Esophagus muscularis mucosa (tissue), 4 donors: ENCODE measurements at regions of chr3 and their contacts with region 1.

Region 1: GRCh38 chr3:12556671-12557472 is at the start of gene MKRN2:
- DNase-seq: peak; percentile 95
- H3K4me3 ChIP-seq: peak within 1 kb of the TSS; percentile 76 to 92 (median 89)
- H3K27ac ChIP-seq: peak within 1 kb of the TSS; percentile 93 to 98 (median 96)
- H3K4me1 ChIP-seq: peaks cover 47 to 60% (median 57%) of the 10 kb centered on the region in 4 donors
- H3K27me3 ChIP-seq: peaks cover 0 to 30% (median 8%) of the 10 kb centered on the region in 4 donors
- CTCF ChIP-seq: peak in 1 of 3 experiments; percentile 23
- EP300 ChIP-seq: no peak
- POLR2A ChIP-seq: peak; percentile 95
- total RNA-seq, gene MKRN2: 29.5 to 55.1 (median 38.0) TPM

Region 2: DNA sequence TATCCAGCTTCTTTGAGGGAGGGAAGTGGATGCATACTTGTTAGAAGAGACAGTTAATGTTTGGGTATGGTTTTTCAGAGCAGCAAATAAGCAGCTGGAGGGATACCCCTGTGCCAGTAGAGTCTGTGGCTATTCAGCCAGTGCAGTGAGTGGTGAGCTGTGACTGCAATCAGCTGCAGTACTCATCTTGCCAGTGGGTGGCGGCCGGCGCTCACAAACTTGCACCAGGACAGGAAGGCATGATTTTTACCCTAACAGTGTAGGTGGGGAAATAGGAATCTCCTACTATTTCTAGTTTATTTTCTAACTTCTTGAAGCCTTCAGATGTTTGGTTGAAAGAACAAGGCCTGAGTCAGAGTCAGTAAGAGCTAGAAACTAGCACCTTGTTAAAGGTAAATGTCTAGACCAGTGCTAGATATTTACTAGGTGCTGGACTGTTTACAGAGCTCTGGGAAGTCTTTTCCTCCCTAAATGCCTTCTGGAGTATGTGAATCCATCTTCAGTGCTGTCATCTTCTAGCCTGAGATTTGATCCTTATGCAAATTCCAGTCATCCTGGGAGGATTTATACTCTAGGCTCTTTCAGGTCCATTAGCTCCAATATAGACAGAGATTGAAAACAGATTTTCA is 421.7 kb before region 1 on chr3:
- intact Hi-C with region 1: loop called (anchors 10 kb)
- DNase-seq: no peak
- H3K4me3 ChIP-seq: no peak overlapping the region
- H3K27ac ChIP-seq: no peak overlapping the region
- H3K4me1 ChIP-seq: peaks cover 4 to 20% (median 12%) of the 10 kb centered on the region in 4 donors
- H3K27me3 ChIP-seq: peaks cover 0 to 3% (median 0%) of the 10 kb centered on the region in 4 donors
- CTCF ChIP-seq: peak; percentile 82
- EP300 ChIP-seq: no peak
- POLR2A ChIP-seq: no peak

Region 3: DNA sequence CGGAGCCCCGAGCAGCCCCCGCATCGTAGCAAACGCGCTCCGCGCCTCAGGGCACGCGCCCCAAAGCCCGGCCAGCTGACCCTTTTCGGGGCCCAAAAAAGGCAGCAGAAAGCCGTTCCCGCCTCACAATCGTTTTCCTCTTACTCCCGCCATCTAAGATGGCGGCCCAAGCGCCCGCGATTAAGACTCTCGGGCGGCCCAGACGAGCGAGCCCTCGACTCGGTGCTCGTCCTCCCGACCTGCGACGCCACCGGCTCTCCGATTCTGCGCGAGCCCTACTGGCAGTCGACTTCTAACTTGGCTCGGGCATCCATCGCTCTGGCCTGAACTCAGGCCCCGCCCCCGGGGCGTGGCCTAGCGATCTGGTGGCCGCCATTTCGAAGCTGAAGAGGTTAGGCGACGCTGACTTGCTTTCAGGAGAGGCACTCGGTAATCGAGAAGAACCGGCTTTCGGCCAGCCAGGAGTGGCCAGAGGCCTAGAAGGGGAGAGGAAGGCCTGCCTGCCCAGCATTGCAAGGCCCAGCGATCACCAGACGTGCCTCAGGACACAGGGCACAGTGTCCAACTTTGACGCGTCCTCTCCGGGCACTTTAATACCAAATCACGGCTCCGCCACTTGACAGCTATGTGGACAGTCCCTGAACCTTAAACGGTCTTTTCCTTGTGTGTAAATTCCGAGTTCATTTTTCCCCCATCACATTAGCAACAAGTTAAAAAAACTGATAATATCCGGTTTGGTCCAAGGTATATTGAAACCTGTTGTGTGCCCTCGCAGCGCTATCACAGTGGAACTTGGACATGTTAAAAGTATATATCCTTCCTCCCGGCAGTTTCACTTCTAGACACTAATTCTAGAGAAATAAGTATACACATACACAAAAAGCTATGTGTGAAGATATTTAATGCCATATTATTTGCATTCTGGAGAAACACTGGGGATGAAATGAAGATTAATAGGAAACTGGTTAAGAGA is 107.3 kb after region 1 on chr3 and contains the start of gene RAF1:
- intact Hi-C with region 1: loop called (anchors 1 kb)
- DNase-seq: peak; percentile 99
- H3K4me3 ChIP-seq: peak within 1 kb of the TSS; percentile 87 to 100 (median 96)
- H3K27ac ChIP-seq: peak within 1 kb of the TSS; percentile 99 to 100 (median 100)
- H3K4me1 ChIP-seq: peaks cover 29 to 44% (median 43%) of the 10 kb centered on the region in 4 donors
- H3K27me3 ChIP-seq: no peaks in the 10 kb centered on the region
- CTCF ChIP-seq: peak in 2 of 3 experiments; percentile 6 to 20
- EP300 ChIP-seq: no peak
- POLR2A ChIP-seq: peak; percentile 32
- total RNA-seq, gene RAF1: 113 to 153 (median 116) TPM

Region 4: GRCh38 chr3:12719984-12720898 is 163.4 kb after region 1 on chr3:
- intact Hi-C with region 1: loop called (anchors 5 kb)
- DNase-seq: peak; percentile 93
- H3K4me3 ChIP-seq: peak overlapping the region; percentile 40 to 59 (median 44)
- H3K27ac ChIP-seq: peak overlapping the region in 1 of 4 donors; percentile 53
- H3K4me1 ChIP-seq: peaks cover 9 to 13% (median 11%) of the 10 kb centered on the region in 4 donors
- H3K27me3 ChIP-seq: no peaks in the 10 kb centered on the region
- CTCF ChIP-seq: peak; percentile 92 to 95 (median 95)
- EP300 ChIP-seq: no peak
- POLR2A ChIP-seq: no peak